ENCODE measurements at regions of chr5 and their contacts with region 1.

Region 1: DNA sequence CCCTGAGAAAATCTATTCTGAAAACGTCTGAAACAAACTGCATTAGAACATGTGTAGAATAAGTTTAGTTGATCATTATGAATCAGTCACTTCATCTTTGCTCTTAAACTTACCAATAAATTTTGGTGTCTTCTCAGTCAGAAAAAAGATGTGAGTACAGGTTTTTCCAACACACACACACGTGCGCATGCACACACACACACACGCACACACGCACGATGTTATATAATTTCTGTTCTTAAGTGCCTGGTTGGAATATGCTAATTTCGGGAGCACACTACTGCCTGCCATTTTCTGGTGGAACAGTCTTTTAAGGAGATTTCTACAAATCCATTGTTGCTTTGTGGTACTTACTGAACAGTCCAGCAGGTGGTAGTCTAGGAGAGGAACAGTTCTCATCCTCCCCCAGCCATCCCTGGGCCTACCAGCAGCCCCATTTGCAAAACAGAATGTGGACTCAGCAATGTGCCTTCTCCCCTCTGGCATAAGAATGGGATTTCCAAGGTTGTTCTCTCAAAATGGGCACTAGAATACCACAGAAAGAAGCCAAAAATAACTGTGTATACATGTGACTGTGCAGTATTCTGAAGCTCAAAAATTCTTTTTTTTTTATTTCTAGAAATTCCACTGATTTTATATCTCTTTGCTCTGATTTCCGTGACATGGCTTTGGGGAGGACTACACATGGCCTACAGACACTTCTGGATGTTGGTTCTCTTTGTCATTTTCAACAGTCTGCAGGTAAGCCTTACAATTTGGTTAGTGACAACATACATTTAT is 281.3 kb downstream of the ARRDC3 start:
- DNase-seq: peak; percentile 70 to 80 (median 76)
- ATAC-seq: peak; percentile 96 to 97
- H3K4me3 ChIP-seq: no peak overlapping the region
- H3K27ac ChIP-seq: no peak overlapping the region
- H3K4me1 ChIP-seq: peaks cover 2% of the 10 kb centered on the region
- H3K27me3 ChIP-seq: no peaks in the 10 kb centered on the region

Region 2: DNA sequence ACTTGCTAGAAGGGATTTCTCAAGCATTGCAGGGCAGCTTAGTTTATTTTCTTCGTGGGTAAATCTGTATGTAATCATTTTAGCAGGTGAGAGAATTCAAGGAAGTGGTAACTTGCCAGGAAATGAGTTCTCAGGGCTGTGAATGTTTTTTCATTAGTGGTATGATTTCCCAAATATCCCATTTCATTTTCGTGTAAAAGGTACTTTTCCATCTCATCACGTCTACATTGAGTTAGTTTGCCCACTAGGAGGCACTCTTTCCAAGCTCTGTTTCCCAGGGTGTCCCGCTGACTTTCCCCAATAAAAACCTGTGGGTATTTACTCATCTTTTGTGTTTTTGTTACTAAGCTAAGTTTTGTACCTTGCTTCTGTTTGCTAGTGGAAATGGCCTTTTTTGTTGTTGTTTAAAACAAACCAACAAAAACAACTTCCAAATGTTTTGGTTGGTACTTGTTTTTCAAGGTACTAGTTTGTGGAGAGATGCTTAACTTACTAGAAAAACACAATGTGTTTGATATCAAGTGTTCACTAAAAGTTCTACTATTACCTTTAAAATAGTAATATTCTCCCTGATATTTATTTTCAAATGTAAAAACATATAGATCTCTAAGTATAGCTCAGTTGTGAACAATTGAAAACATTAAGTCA is 169.6 kb before region 1 on chr5:
- intact Hi-C with region 1: loop called in 3 of 4 experiments (anchors 5 to 10 kb)
- DNase-seq: peak in 1 of 3 donors; percentile 20
- ATAC-seq: peak; percentile 72 to 76
- H3K4me3 ChIP-seq: no peak overlapping the region
- H3K27ac ChIP-seq: no peak overlapping the region
- H3K4me1 ChIP-seq: no peaks in the 10 kb centered on the region
- H3K27me3 ChIP-seq: no peaks in the 10 kb centered on the region

Region 3: GRCh38 chr5:91212714-91213092 is 110.9 kb after region 1 on chr5:
- intact Hi-C with region 1: loop called in 1 of 4 experiments (anchors 5 kb)
- DNase-seq: peak in 1 of 3 donors; percentile 34
- ATAC-seq: peak; percentile 58 to 64
- H3K4me3 ChIP-seq: no peak overlapping the region
- H3K27ac ChIP-seq: no peak overlapping the region
- H3K4me1 ChIP-seq: no peaks in the 10 kb centered on the region
- H3K27me3 ChIP-seq: no peaks in the 10 kb centered on the region

Region 4: GRCh38 chr5:91272858-91273257 is 171.1 kb after region 1 on chr5:
- intact Hi-C with region 1: loop called in 1 of 4 experiments (anchors 10 kb)
- DNase-seq: no peak
- ATAC-seq: no peak
- H3K4me3 ChIP-seq: no peak overlapping the region
- H3K27ac ChIP-seq: no peak overlapping the region
- H3K4me1 ChIP-seq: no peaks in the 10 kb centered on the region
- H3K27me3 ChIP-seq: no peaks in the 10 kb centered on the region

Measured in right cardiac atrium (tissue), 5 donors.